Aorta (tissue), 5 donors: ENCODE measurements at regions of chr16 and their contacts with region 1.

Region 1: DNA sequence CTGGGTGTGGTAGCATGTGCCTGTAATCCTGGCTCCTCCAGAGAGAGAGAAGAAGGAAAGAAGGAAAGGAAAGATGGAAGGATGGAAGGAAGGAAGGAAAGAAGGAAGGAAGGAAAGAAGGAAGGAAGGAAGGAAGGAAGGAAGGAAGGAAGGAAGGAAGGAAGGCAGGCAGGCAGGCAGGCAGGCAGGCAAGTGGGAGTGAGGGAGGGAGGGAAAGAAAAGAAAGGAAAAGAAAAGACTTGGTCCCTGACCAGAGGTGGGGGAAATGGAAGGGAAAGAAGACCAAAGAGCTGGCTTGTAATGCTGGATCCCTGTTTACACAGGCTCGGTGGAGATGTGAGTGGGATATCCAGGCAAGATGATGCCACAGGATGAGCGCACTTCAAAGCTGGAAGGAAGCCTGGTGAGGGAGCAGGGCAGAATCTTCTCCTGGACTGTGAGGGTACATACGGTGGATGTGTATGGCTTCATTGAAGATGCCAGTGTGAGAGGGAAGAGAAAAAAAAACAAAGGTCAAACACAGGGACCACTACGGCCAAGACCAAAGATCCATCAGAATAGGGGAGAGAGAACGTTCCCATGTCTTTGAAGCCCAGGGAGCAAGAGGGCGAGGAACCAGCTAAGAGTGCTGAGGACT is 2.1 kb downstream of the CES1 start:
- DNase-seq: no peak
- ATAC-seq: no peak
- H3K4me3 ChIP-seq: no peak overlapping the region
- H3K27ac ChIP-seq: no peak overlapping the region
- H3K4me1 ChIP-seq: no peaks in the 10 kb centered on the region
- H3K27me3 ChIP-seq: no peaks in the 10 kb centered on the region

Region 2: GRCh38 chr16:55529018-55529417 is 301.8 kb before region 1 on chr16:
- intact Hi-C with region 1: no loop called
- DNase-seq: no peak
- ATAC-seq: no peak
- H3K4me3 ChIP-seq: no peak overlapping the region
- H3K27ac ChIP-seq: no peak overlapping the region
- H3K4me1 ChIP-seq: no peaks in the 10 kb centered on the region
- H3K27me3 ChIP-seq: no peaks in the 10 kb centered on the region

Region 3: DNA sequence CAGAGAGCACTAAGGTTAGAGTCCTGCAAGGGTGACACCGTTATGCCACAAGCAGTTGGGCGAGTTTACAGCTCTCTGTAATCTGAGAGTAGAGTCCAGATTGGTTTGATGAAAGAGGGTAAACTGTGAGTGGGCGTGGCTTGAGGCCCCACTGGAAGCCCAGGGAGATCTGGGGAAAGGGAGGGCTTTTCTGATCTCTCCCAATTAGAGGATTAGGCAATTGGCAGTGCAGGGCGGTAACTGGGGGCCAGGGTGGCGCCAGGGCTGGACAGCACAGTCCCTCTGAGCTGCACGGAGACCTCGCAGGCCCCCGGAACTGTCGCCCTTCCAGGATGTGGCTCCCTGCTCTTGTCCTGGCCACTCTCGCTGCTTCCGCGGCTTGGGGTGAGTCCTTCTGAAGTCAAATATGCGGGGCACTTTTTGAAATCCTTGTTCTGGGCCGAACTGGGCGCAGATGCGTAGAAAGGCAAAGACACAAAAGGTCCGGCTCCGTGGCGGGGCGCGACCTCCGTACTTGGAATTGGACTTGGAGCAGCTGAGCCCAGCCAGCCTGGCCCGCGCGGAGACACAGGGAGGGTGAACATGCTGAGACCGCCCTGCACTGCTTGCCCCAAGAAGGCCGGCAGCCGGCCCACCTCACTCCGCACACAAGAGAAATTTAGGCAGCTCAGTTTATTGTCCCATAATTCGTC is 70.3 kb before region 1 on chr16:
- intact Hi-C with region 1: loop called in 1 of 2 experiments (anchors 2 kb)
- DNase-seq: peak; percentile 43 to 70
- ATAC-seq: peak; percentile 86
- H3K4me3 ChIP-seq: no peak overlapping the region
- H3K27ac ChIP-seq: no peak overlapping the region
- H3K4me1 ChIP-seq: no peaks in the 10 kb centered on the region
- H3K27me3 ChIP-seq: no peaks in the 10 kb centered on the region

Region 4: DNA sequence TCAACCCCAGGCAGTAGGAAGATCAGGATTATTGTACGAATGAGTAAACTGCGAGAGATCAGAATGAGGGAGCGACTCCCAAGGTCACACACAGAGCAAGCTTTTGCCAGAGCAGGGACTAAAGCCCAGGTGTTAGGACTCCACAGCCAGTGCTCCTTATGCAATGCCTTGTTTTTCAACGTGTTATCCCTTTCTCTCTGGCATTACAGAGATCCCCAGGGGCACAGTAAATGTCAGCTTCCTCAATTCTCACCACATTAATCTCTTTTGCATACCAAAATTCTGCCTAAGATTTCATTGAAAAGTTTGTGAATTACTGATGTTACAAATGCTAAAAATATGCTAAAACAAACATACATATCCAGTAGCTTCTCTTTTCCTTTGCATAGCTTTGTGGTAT is 112.5 kb after region 1 on chr16:
- intact Hi-C with region 1: no loop called
- DNase-seq: no peak
- ATAC-seq: no peak
- H3K4me3 ChIP-seq: no peak overlapping the region
- H3K27ac ChIP-seq: no peak overlapping the region
- H3K4me1 ChIP-seq: no peaks in the 10 kb centered on the region
- H3K27me3 ChIP-seq: no peaks in the 10 kb centered on the region